ENCODE measurements at regions of chr6 and their contacts with region 1.

Region 1: GRCh38 chr6:157667211-157668008 is 155.6 kb upstream of the SNX9 start:
- DNase-seq: peak; percentile 83 to 89 (median 84)
- H3K4me3 ChIP-seq: peak overlapping the region in 4 of 7 experiments; percentile 6 to 58 (median 26)
- H3K27ac ChIP-seq: peak overlapping the region; percentile 71 to 85
- H3K4me1 ChIP-seq: peaks cover 0 to 39% (median 30%) of the 10 kb centered on the region in 4 experiments
- H3K27me3 ChIP-seq: no peaks in the 10 kb centered on the region

Region 2: DNA sequence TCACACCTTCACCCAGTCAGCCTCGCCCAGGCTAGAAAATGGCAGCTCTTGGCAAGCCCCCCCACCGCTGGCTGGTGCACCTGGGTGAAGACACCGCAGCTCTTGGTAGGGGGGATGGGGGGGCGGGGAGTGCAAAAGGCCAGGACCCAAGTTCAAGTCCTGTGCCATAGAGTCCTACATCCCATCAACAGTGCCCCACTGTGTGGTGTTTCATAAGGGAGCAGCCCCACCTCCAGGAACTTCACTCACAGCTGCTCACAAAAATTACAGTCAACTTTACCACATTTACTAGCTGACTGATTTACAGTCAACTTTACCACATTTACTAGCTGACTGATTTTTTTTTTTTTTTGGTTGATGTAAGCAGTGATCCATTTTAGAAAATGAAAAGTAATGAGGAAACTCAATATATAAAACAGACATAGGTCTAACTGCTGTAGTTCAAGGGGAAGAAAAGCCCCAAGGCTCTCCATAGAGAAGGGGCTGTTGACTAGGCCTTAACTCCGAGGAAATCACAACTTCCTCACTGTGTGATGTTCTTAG is 53.3 kb before region 1 on chr6:
- CTCF ChIA-PET with region 1: interaction called, 57 read pairs
- POLR2A ChIA-PET with region 1: no interaction called
- DNase-seq: peak; percentile 65 to 91 (median 84)
- H3K4me3 ChIP-seq: no peak overlapping the region
- H3K27ac ChIP-seq: no peak overlapping the region
- H3K4me1 ChIP-seq: peaks cover 7 to 27% (median 18%) of the 10 kb centered on the region in 4 experiments
- H3K27me3 ChIP-seq: no peaks in the 10 kb centered on the region

Region 3: GRCh38 chr6:157644043-157644810 is 23.2 kb before region 1 on chr6:
- CTCF ChIA-PET with region 1: interaction called, 77 read pairs
- POLR2A ChIA-PET with region 1: interaction called, 3 read pairs
- DNase-seq: peak in 2 of 3 donors; percentile 53 to 57
- H3K4me3 ChIP-seq: no peak overlapping the region
- H3K27ac ChIP-seq: no peak overlapping the region
- H3K4me1 ChIP-seq: peaks cover 11 to 67% (median 52%) of the 10 kb centered on the region in 4 experiments
- H3K27me3 ChIP-seq: no peaks in the 10 kb centered on the region

Region 4: DNA sequence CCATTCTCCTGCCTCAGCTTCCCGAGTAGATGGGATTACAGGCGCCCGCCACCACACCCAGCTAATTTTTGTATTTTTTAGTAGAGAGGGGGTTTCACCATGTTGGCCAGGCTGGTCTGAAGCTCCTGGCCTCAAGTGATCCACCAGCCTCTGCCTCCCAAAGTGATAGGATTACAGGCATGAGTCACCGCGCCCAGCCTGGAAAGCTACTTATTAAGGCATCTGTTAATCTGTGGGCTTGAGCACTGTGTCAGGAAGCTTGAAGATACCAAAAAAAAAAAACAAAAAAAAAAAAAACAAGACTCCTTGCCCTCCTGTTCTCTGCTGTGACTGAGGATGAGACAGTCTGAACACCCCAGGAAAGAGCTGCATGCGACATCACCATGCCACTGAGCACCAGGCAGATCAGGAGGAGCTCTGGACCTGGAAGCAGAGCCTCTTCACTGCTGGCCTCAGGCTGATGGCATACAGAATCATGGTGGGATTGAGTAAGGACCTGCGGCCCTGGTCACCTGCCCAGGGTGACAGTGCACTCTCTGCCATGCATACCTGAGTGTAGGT is 10.9 kb before region 1 on chr6:
- CTCF ChIA-PET with region 1: interaction called, 63 read pairs
- POLR2A ChIA-PET with region 1: no interaction called
- DNase-seq: no peak
- H3K4me3 ChIP-seq: no peak overlapping the region
- H3K27ac ChIP-seq: no peak overlapping the region
- H3K4me1 ChIP-seq: peaks cover 0 to 7% (median 6%) of the 10 kb centered on the region in 4 experiments
- H3K27me3 ChIP-seq: no peaks in the 10 kb centered on the region

Region 5: DNA sequence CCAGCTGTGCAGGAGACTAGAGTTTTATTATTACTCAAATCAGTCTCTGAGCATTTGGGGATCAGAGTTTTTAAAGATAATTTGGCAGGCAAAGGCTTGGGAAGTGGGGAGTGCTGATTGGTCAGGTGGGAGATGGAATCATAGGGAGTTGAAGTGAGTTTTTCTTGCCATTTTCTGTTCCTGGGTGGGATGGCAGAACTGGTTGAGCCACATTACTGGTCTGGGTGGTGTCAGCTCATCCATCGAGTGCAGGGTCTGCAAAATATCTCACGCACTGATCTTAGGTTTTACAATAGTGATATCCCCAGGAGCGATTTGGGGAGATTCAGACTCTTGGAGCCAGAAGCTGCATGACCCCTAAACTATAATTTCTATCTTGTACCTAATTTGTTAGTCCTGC is 31.3 kb after region 1 on chr6:
- CTCF ChIA-PET with region 1: no interaction called
- POLR2A ChIA-PET with region 1: no interaction called
- DNase-seq: no peak
- H3K4me3 ChIP-seq: no peak overlapping the region
- H3K27ac ChIP-seq: no peak overlapping the region
- H3K4me1 ChIP-seq: peaks cover 0 to 5% (median 0%) of the 10 kb centered on the region in 4 experiments
- H3K27me3 ChIP-seq: no peaks in the 10 kb centered on the region

Region 6: GRCh38 chr6:158213925-158214674 is 546.7 kb after region 1 on chr6:
- CTCF ChIA-PET with region 1: no interaction called
- POLR2A ChIA-PET with region 1: no interaction called
- DNase-seq: peak; percentile 74 to 85 (median 78)
- H3K4me3 ChIP-seq: no peak overlapping the region
- H3K27ac ChIP-seq: no peak overlapping the region
- H3K4me1 ChIP-seq: no peaks in the 10 kb centered on the region
- H3K27me3 ChIP-seq: no peaks in the 10 kb centered on the region

Region 7: DNA sequence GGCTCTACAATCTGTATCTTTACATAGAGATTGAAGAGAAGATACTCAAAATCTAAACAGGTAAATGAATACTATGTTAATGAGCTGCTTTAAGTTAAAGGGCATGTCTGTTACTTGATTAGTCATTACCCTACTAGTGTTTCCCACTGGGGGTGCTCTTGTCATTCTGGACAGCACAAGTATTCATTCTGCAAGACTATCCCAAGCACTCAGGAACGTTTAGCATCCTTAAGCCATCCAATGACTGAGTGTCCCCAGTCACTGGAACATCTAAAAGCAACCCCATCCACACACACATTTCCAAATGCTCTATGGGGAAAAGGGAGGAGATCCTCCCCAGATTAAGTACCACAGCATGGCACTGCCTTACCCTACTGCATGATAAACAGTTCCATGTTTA is 1126.0 kb after region 1 on chr6:
- CTCF ChIA-PET with region 1: no interaction called
- POLR2A ChIA-PET with region 1: no interaction called
- DNase-seq: peak; percentile 50 to 72 (median 70)
- H3K4me3 ChIP-seq: no peak overlapping the region
- H3K27ac ChIP-seq: no peak overlapping the region
- H3K4me1 ChIP-seq: peaks cover 8 to 17% (median 12%) of the 10 kb centered on the region in 4 experiments
- H3K27me3 ChIP-seq: no peaks in the 10 kb centered on the region